Common myeloid progenitor, CD34-positive (primary cell): ENCODE measurements at regions of chr1 and their contacts with region 1.

Region 1: GRCh38 chr1:40338745-40339424 is 21.8 kb upstream of the COL9A2 start:
- DNase-seq: peak; percentile 84 to 92 (median 89)
- H3K4me3 ChIP-seq: peak overlapping the region in 2 of 7 experiments; percentile 52 to 55
- H3K27ac ChIP-seq: no peak overlapping the region
- H3K4me1 ChIP-seq: peaks cover 0 to 21% (median 8%) of the 10 kb centered on the region in 4 experiments
- H3K27me3 ChIP-seq: no peaks in the 10 kb centered on the region

Region 2: DNA sequence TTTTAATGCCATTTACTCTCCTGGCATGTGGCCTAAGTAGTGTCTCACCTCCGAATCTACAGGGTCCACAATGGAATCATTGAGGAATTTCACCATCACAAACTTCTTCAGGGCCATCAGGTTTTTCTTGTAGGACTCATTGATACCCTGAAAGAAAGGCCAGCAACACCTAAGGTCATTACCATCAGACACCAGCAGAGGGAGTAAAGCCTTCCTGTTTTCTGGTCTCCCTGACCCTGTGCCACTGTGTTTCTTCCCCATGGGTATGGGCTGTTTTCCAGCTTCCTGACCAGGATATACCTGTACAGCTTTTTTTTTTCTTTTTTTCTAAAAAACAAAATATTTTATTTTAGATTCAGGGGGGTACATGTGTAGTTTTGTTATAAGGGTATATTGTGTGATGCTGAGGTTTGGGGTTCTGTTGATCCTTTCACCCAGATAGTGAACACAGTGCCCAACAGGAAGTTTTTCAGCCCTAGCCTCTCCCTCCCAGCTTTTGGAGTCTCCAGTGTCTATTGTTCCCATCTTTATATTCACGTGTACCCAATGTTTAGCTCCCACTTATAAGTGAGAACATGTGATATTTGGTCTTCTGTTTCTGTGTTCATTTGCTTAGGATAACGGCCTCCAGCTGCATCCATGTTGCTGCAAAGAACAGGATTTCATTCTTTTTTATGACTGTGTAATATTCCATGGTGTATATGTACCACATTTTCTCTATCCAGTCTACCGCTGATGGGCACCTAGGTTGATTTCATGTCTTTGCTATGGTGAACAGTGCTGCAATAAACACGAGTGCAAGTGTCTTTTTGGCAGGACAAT is 260.2 kb before region 1 on chr1:
- CTCF ChIA-PET with region 1: interaction called, 23 read pairs
- POLR2A ChIA-PET with region 1: interaction called, 6 read pairs
- DNase-seq: peak; percentile 51 to 68 (median 61)
- H3K4me3 ChIP-seq: no peak overlapping the region
- H3K27ac ChIP-seq: no peak overlapping the region
- H3K4me1 ChIP-seq: peaks cover 0 to 15% (median 7%) of the 10 kb centered on the region in 4 experiments
- H3K27me3 ChIP-seq: no peaks in the 10 kb centered on the region

Region 3: DNA sequence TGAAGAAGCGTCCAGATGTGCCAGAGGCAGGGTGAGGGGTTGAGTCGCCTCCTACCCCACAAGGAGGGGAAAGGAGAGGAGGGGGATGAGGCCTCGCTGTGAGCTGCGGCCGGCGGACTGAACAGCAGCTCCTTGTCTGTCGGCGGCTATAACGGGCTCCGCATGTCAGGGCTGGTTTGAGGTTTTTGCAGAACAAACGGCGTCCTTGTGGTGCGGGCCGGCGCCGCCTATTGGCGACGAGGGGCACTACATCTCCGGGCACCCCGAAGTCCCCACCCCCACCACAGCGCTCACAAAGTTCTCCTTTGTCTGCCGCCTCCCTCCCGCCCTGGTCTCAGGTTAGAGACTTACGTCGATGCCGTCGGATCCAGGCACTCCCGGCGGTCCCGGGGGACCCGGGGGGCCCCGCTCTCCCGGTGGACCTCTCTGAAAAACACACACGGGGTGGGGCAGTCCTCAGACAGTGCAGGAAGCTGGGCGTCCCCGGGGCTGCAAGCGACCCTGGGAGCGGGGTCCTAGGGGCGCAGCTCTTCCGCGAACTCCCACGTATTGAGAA is 23.6 kb before region 1 on chr1:
- CTCF ChIA-PET with region 1: interaction called, 66 read pairs
- POLR2A ChIA-PET with region 1: no interaction called
- DNase-seq: peak; percentile 88 to 96 (median 95)
- H3K4me3 ChIP-seq: peak overlapping the region; percentile 42 to 77 (median 60)
- H3K27ac ChIP-seq: no peak overlapping the region
- H3K4me1 ChIP-seq: peaks cover 0 to 43% (median 43%) of the 10 kb centered on the region in 4 experiments
- H3K27me3 ChIP-seq: peaks cover 5 to 35% (median 19%) of the 10 kb centered on the region in 5 experiments

Region 4: GRCh38 chr1:40385437-40386358 is 46.8 kb after region 1 on chr1:
- CTCF ChIA-PET with region 1: interaction called, 23 read pairs
- POLR2A ChIA-PET with region 1: interaction called, 3 read pairs
- DNase-seq: peak; percentile 88 to 98 (median 97)
- H3K4me3 ChIP-seq: peak overlapping the region in 6 of 7 experiments; percentile 23 to 67 (median 42)
- H3K27ac ChIP-seq: peak overlapping the region; percentile 88 to 96
- H3K4me1 ChIP-seq: peaks cover 78 to 96% (median 81%) of the 10 kb centered on the region in 4 experiments
- H3K27me3 ChIP-seq: no peaks in the 10 kb centered on the region

Region 5: GRCh38 chr1:40404670-40405462 is 66.0 kb after region 1 on chr1:
- CTCF ChIA-PET with region 1: interaction called, 25 read pairs
- POLR2A ChIA-PET with region 1: interaction called, 3 read pairs
- DNase-seq: peak; percentile 77 to 86 (median 82)
- H3K4me3 ChIP-seq: peak overlapping the region in 1 of 7 experiments; percentile 54
- H3K27ac ChIP-seq: no peak overlapping the region
- H3K4me1 ChIP-seq: peaks cover 3 to 20% (median 16%) of the 10 kb centered on the region in 4 experiments
- H3K27me3 ChIP-seq: no peaks in the 10 kb centered on the region